ENCODE measurements at regions of chr17 and their contacts with region 1.

Region 1: GRCh38 chr17:72725433-72726068 is 366.9 kb downstream of the SLC39A11 start:
- DNase-seq: peak; percentile 66
- H3K4me3 Mint-ChIP-seq: no peak overlapping the region
- H3K27ac Mint-ChIP-seq: peak overlapping the region; percentile 96
- H3K4me1 Mint-ChIP-seq: peaks cover 69% of the 10 kb centered on the region
- H3K27me3 Mint-ChIP-seq: no peaks in the 10 kb centered on the region

Region 2: DNA sequence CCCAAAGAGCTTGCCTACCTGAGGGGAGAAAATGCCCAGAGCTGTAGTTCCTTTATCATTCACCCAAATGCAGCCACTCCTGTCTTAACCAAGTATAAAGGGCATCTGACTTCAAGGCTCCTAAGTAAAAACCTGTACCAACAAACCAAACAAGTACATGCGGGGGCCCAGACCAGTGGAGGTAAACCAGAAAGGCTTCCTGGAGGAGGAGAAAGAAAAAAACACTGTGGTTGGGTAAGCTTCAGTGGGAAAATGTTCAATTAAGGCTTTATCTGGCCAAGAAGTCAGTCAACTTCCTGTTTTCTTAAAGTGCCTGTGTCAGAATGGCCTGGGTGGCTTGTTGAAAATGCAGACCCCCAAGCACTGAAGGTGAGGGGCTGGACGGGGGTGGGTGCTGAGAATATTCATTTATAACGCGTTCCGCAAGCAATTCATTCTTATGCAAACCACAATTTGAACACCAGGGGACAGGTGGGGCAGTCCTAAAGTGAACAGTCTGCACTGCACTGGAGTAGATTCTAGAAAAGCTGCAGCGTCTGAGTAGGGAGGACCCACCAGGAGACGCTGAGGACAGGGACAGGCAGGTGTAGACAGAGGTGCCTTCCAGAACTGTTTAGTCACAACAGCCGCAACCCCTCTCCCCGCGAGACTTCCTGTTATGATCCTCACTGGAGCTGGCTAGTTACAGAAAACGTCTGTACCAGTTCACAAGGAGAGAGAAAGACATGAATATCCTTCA is 137.6 kb before region 1 on chr17:
- CTCF ChIA-PET with region 1: interaction called, 25 read pairs
- DNase-seq: peak; percentile 58
- H3K4me3 Mint-ChIP-seq: peak overlapping the region; percentile 21
- H3K27ac Mint-ChIP-seq: peak overlapping the region; percentile 79
- H3K4me1 Mint-ChIP-seq: peaks cover 50% of the 10 kb centered on the region
- H3K27me3 Mint-ChIP-seq: peaks cover 57% of the 10 kb centered on the region

Region 3: DNA sequence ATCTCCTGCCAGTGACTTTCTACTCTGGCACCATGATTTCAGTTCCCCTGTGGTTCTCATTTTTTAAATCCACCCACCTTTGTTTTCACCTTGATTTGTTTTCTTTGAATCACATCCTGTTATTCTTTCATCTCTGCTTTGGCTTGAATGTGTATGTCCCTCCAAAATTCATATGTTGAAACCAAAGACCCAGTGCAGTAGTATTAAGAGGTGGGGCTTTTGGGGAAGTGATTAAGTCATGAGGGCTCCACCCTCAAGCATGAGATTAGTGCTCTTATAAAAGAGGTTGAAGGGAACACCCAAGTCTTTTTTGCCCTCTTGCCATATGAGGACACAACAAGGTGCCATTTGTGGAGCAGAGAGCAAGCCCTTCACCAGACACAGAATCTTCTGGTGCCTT is 15.4 kb before region 1 on chr17:
- CTCF ChIA-PET with region 1: interaction called, 21 read pairs
- DNase-seq: no peak
- H3K4me3 Mint-ChIP-seq: peak overlapping the region; percentile 48
- H3K27ac Mint-ChIP-seq: peak overlapping the region; percentile 89
- H3K4me1 Mint-ChIP-seq: peaks cover 82% of the 10 kb centered on the region
- H3K27me3 Mint-ChIP-seq: no peaks in the 10 kb centered on the region

Region 4: DNA sequence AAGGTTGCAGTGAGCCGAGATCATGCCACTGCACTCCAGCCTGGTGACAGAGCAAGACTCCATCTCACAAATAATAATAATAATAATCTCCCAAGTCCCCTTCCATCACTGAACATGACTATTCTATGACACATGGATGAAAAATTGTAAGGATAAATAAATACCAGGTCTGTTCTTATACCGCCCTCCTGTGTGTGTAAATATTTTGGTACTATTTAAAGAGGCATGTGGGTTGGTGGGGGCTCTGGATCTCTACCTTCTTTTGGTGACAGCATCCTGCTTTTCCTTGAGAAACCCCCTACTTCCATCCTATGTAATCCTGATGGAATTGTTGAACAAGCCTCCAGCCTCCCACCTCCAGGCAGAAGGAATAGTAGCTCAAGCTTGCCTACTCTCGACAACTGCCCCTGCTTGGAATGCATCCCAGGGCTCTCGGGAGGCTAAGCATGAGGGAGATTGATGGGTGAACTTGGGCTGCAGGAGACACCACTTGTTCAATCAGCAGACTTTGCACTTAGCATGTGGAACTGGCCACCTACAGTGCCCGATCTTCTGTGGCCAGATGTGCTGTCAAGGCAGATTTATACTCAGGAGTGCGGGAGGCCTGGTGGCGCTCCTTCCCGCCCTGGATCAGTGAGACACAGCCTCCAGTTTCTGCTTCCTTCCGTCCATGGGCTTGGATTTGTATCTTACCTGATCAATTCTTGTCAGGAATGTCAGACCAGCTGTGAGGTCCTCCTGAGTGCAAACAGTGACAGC is 79.6 kb after region 1 on chr17:
- CTCF ChIA-PET with region 1: no interaction called
- DNase-seq: no peak
- H3K4me3 Mint-ChIP-seq: no peak overlapping the region
- H3K27ac Mint-ChIP-seq: no peak overlapping the region
- H3K4me1 Mint-ChIP-seq: no peaks in the 10 kb centered on the region
- H3K27me3 Mint-ChIP-seq: no peaks in the 10 kb centered on the region

Region 5: GRCh38 chr17:73156166-73156840 is 430.8 kb after region 1 on chr17:
- CTCF ChIA-PET with region 1: interaction called, 92 read pairs
- DNase-seq: peak; percentile 73
- H3K4me3 Mint-ChIP-seq: no peak overlapping the region
- H3K27ac Mint-ChIP-seq: no peak overlapping the region
- H3K4me1 Mint-ChIP-seq: peaks cover 4% of the 10 kb centered on the region
- H3K27me3 Mint-ChIP-seq: peaks cover 51% of the 10 kb centered on the region

Region 6: DNA sequence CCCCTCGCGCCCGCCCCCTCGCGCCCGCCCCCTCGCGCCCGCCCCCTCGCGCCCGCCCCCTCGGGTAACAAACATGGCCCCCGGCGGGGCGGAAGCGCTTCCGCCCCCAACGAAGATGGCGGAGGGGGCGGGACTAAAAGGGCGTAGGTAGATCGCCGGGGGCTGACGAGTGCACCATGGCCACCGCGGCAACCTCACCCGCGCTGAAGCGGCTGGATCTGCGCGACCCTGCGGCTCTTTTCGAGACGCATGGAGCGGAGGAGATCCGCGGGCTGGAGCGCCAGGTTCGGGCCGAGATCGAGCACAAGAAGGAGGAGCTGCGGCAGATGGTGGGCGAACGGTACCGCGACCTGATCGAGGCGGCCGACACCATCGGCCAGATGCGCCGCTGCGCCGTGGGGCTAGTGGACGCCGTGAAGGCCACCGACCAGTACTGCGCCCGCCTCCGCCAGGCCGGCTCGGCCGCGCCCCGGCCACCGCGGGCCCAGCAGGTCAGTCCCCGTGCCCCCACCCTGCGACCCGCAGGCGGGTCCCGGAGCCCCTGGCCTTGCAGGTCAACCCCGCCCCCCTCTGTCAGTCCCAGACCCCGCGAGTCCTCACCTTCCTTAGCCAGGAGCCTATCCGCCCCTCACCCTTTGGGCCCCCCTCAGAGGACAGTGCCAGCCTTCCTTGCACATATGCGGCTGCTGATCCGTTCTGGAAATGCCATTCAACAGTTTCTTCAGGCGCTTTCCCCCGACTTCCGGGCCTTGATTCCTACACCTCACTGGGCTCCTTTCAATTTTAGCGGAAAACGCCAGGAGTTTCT is 467.5 kb after region 1 on chr17 and contains the start of gene COG1:
- CTCF ChIA-PET with region 1: interaction called, 59 read pairs
- DNase-seq: peak; percentile 94
- H3K4me3 Mint-ChIP-seq: peak within 1 kb of the TSS; percentile 98
- H3K27ac Mint-ChIP-seq: peak within 1 kb of the TSS; percentile 98
- H3K4me1 Mint-ChIP-seq: peaks cover 39% of the 10 kb centered on the region
- H3K27me3 Mint-ChIP-seq: no peaks in the 10 kb centered on the region

Region 7: GRCh38 chr17:73247726-73248125 is 522.2 kb after region 1 on chr17:
- CTCF ChIA-PET with region 1: interaction called, 31 read pairs
- DNase-seq: no peak
- H3K4me3 Mint-ChIP-seq: no peak overlapping the region
- H3K27ac Mint-ChIP-seq: no peak overlapping the region
- H3K4me1 Mint-ChIP-seq: no peaks in the 10 kb centered on the region
- H3K27me3 Mint-ChIP-seq: no peaks in the 10 kb centered on the region

Region 8: DNA sequence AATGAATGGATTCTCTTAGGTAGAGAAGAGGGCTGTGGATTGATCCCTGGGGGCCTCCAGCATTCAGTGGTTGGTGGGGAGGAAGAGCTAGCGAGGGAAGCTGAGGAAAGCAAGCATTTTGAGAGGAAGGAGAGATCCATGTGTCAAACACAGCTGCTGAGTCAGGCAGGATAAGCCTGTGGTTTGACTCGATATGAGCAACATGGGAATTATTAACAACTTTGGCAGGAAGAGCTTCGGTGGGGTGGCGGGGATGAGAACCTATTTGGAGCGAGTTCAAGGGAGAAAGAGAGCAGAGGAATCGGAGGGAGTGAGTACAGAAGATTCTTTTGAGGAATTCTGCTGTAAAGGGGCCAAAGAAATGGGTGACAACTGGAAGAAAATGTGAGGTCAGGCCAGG is 645.7 kb after region 1 on chr17:
- CTCF ChIA-PET with region 1: interaction called, 87 read pairs
- DNase-seq: no peak
- H3K4me3 Mint-ChIP-seq: no peak overlapping the region
- H3K27ac Mint-ChIP-seq: no peak overlapping the region
- H3K4me1 Mint-ChIP-seq: no peaks in the 10 kb centered on the region
- H3K27me3 Mint-ChIP-seq: peaks cover 18% of the 10 kb centered on the region